ENCODE measurements at regions of chr20 and their contacts with region 1.

Region 1: DNA sequence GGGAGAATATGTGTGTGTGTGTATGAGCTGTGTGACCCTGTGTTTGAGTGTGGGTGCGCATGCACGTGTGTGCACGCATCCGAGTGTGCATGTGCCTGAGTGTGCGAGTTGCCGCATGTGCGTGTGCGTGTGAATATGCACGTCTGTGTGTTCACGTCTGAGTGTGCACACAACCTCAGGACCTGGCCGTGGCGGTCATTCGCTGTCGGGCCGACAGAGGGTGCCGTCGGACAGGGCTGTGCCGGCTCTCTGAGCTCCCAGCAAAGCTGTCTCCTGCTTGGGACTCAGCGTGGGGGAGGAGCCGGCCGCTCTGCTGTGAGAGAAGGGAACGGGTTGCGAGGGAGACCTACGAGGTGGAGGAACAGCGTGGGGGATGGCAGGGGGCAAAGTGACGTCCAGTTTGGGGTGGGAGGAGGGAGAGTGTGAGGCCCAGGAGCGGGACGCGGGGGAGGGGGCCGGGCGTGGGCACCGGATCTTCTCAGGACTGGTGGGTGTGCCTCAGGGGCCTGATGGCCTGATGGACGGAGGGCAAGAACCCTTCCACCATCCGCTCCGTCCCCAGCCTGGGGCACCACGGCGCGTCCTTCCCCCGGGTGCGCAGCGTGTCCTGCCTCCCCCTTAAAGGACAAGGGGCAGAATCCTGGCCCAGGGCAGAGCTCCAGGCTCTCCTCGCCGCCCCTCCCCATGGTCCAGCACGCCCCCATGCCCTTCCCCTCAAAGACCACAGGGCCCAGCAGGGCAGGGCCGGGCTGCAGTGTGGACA is 19.9 kb downstream of the SLC17A9 start:
- DNase-seq: peak; percentile 82
- ATAC-seq: peak; percentile 99
- H3K4me3 Mint-ChIP-seq: peak overlapping the region; percentile 82
- H3K27ac Mint-ChIP-seq: peak overlapping the region; percentile 24
- H3K4me1 Mint-ChIP-seq: peaks cover 22% of the 10 kb centered on the region
- H3K27me3 Mint-ChIP-seq: peaks cover 24% of the 10 kb centered on the region
- CTCF ChIP-seq: no peak

Region 2: GRCh38 chr20:62822788-62823651 is 149.4 kb before region 1 on chr20:
- CTCF ChIA-PET with region 1: no interaction called
- POLR2A ChIA-PET with region 1: no interaction called
- intact Hi-C with region 1: loop called (anchors 2 kb)
- DNase-seq: no peak
- ATAC-seq: peak; percentile 15
- H3K4me3 Mint-ChIP-seq: no peak overlapping the region
- H3K27ac Mint-ChIP-seq: no peak overlapping the region
- H3K4me1 Mint-ChIP-seq: peaks cover 21% of the 10 kb centered on the region
- H3K27me3 Mint-ChIP-seq: peaks cover 8% of the 10 kb centered on the region
- CTCF ChIP-seq: no peak

Region 3: DNA sequence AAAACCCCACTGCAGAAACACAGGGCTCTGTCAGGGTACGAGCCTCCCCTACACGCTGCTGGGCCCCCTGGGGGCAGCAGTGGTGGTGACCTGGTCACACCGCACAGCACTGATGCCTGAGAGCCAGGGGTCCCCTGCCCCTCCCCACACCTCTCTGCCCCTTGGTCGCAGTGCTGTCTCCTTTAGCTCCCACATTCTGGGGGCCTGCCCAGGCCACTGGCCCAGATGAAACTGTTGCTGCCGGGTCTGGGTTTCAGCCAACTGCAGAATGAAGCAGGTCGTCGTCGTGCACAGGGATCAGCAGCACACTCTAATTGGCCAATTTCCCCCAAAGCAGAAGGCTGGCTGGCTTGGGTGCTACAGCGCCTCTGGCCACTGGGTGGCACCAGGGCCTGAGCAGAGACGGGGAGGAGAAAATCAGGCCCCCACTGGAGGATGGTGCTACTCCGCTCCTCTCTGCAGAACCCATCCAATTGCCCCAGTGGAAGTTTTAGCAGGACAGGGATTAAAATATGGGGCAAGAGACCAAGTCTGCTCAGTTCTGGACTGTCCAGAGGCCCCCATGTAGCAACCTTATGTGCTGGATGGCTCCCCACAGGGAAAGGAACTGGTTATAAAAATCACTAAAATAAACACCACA is 72.3 kb before region 1 on chr20:
- CTCF ChIA-PET with region 1: interaction called, 6 read pairs
- POLR2A ChIA-PET with region 1: interaction called, 3 read pairs
- intact Hi-C with region 1: loop called (anchors 1 kb)
- DNase-seq: peak; percentile 55
- ATAC-seq: peak; percentile 98
- H3K4me3 Mint-ChIP-seq: peak overlapping the region; percentile 46
- H3K27ac Mint-ChIP-seq: peak overlapping the region; percentile 35
- H3K4me1 Mint-ChIP-seq: peaks cover 25% of the 10 kb centered on the region
- H3K27me3 Mint-ChIP-seq: no peaks in the 10 kb centered on the region
- CTCF ChIP-seq: peak; percentile 81

Region 4: GRCh38 chr20:62937366-62938104 is 34.9 kb before region 1 on chr20:
- CTCF ChIA-PET with region 1: no interaction called
- POLR2A ChIA-PET with region 1: interaction called, 10 read pairs
- intact Hi-C with region 1: loop called (anchors 2 kb)
- DNase-seq: peak; percentile 97
- ATAC-seq: peak; percentile 88
- H3K4me3 Mint-ChIP-seq: peak overlapping the region; percentile 94
- H3K27ac Mint-ChIP-seq: peak overlapping the region; percentile 94
- H3K4me1 Mint-ChIP-seq: peaks cover 42% of the 10 kb centered on the region
- H3K27me3 Mint-ChIP-seq: no peaks in the 10 kb centered on the region
- CTCF ChIP-seq: no peak

Region 5: GRCh38 chr20:63009045-63009961 is 36.9 kb after region 1 on chr20:
- CTCF ChIA-PET with region 1: interaction called, 15 read pairs
- POLR2A ChIA-PET with region 1: interaction called, 7 read pairs
- intact Hi-C with region 1: loop called (anchors 1 kb)
- DNase-seq: peak; percentile 86
- ATAC-seq: peak; percentile 86
- H3K4me3 Mint-ChIP-seq: peak overlapping the region; percentile 46
- H3K27ac Mint-ChIP-seq: no peak overlapping the region
- H3K4me1 Mint-ChIP-seq: peaks cover 26% of the 10 kb centered on the region
- H3K27me3 Mint-ChIP-seq: peaks cover 43% of the 10 kb centered on the region
- CTCF ChIP-seq: no peak

Region 6: GRCh38 chr20:63056236-63056948 is 83.9 kb after region 1 on chr20:
- CTCF ChIA-PET with region 1: no interaction called
- POLR2A ChIA-PET with region 1: no interaction called
- intact Hi-C with region 1: loop called (anchors 1 kb)
- DNase-seq: peak; percentile 47
- ATAC-seq: peak; percentile 57
- H3K4me3 Mint-ChIP-seq: no peak overlapping the region
- H3K27ac Mint-ChIP-seq: no peak overlapping the region
- H3K4me1 Mint-ChIP-seq: no peaks in the 10 kb centered on the region
- H3K27me3 Mint-ChIP-seq: peaks cover 13% of the 10 kb centered on the region
- CTCF ChIP-seq: peak; percentile 52

Region 7: GRCh38 chr20:63178889-63179686 is 206.6 kb after region 1 on chr20:
- CTCF ChIA-PET with region 1: interaction called, 5 read pairs
- POLR2A ChIA-PET with region 1: interaction called, 3 read pairs
- intact Hi-C with region 1: loop called (anchors 1 kb)
- DNase-seq: peak; percentile 70
- ATAC-seq: peak; percentile 80
- H3K4me3 Mint-ChIP-seq: peak overlapping the region; percentile 66
- H3K27ac Mint-ChIP-seq: no peak overlapping the region
- H3K4me1 Mint-ChIP-seq: peaks cover 21% of the 10 kb centered on the region
- H3K27me3 Mint-ChIP-seq: peaks cover 31% of the 10 kb centered on the region
- CTCF ChIP-seq: no peak